ENCODE measurements at regions of chr1 and their contacts with region 1.

Region 1: DNA sequence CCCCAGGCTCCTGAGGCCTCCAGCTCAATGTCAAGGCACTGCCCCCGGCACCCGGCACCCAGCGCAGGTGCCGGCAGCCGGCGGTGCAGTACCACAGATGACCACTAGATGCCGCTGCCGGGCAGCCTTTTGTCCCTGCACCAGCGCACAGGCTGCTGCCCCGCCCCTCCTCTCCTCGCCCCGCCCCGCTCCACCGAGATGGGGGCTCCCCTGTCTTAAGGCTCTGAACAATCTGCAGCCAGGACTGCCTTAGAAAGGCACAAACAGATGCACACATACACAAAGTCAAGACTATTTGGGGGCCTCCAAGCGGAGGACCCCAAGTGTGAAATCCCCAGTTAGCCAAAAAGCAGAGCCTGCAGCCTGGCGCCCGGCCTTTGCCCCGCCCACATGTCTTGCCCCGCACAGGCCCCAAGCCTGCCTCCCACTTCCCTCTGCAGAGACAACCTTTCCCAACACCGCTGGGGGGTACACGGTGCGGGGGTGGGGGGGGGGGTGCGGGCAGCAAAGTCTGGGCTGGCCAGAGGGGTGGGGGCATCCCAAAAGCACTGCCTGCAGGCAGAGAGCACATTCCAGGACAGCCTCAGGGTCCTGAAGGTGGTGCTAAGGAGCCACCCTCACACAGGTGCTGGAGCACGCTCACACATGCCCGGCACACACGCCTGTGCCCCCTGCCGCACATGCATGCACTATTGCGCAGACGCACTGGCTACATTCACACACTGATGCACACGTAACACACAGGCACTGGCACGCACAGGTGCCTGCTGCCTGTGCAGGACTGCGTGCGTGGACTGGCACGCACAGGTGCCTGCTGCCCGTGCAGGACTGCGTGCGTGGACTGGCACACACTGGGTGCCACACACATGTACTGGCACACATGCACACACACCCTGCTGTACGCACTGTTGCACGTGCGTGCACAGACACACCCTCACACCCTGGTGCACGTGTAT is 37.1 kb downstream of the ARHGEF16 start:
- DNase-seq: peak; percentile 24
- ATAC-seq: peak; percentile 98
- H3K4me3 ChIP-seq: no peak overlapping the region
- H3K27ac ChIP-seq: no peak overlapping the region
- H3K4me1 ChIP-seq: no peaks in the 10 kb centered on the region
- H3K27me3 ChIP-seq: no peaks in the 10 kb centered on the region
- CTCF ChIP-seq: peak; percentile 89
- POLR2A ChIP-seq: no peak
- RAD21 ChIP-seq: peak; percentile 90

Region 2: GRCh38 chr1:3618881-3619671 is 127.5 kb after region 1 on chr1:
- CTCF ChIA-PET with region 1: interaction called, 9 read pairs
- POLR2A ChIA-PET with region 1: no interaction called
- dilution Hi-C with region 1: no loop called
- in situ Hi-C with region 1: loop called (anchors 5 kb)
- intact Hi-C with region 1: loop called (anchors 1 kb)
- DNase-seq: peak; percentile 80
- ATAC-seq: peak; percentile 89
- H3K4me3 ChIP-seq: no peak overlapping the region
- H3K27ac ChIP-seq: no peak overlapping the region
- H3K4me1 ChIP-seq: peaks cover 11% of the 10 kb centered on the region
- H3K27me3 ChIP-seq: no peaks in the 10 kb centered on the region
- CTCF ChIP-seq: peak; percentile 92
- POLR2A ChIP-seq: no peak
- RAD21 ChIP-seq: peak; percentile 72

Region 3: DNA sequence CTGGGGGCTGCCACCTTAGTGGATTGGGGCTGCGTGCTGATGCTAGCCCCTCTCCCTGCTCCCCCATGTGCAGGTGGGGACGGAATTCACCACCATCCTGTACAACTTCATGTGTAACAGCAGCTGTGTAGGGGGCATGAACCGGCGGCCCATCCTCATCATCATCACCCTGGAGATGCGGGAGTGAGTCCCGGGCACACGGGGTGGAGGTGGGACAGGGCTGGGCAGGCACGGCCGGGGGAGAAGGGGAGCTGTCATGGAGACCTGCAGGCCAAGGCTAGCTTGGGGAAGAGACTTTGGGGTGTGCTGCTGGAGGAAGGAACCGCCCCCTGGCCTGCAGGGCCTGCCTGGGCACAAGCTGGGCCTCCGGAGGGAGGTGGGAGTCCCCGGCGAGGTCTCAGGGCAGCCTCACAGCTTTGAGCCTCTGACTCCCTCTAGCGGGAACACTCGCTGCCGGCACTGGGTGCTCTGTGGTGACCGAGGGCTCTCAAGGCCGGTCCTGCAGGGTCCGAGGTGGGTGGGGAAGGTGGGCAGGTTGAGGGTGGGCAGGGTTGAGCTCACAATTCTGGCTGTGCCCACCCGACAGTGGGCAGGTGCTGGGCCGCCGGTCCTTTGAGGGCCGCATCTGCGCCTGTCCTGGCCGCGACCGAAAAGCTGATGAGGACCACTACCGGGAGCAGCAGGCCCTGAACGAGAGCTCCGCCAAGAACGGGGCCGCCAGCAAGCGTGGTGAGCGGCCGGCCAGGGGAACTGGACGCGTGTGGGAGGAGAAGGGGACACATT is 235.7 kb after region 1 on chr1:
- CTCF ChIA-PET with region 1: no interaction called
- POLR2A ChIA-PET with region 1: no interaction called
- dilution Hi-C with region 1: no loop called
- in situ Hi-C with region 1: no loop called
- intact Hi-C with region 1: loop called (anchors 10 kb)
- DNase-seq: no peak
- ATAC-seq: peak; percentile 54; the same call in 1 of the 2 replicates
- H3K4me3 ChIP-seq: no peak overlapping the region
- H3K27ac ChIP-seq: no peak overlapping the region
- H3K4me1 ChIP-seq: no peaks in the 10 kb centered on the region
- H3K27me3 ChIP-seq: no peaks in the 10 kb centered on the region; the same call in 1 of the 2 replicates
- CTCF ChIP-seq: peak; percentile 38
- POLR2A ChIP-seq: no peak
- RAD21 ChIP-seq: peak; percentile 21; the same call in 1 of the 2 replicates

Region 4: GRCh38 chr1:3942818-3943431 is 451.4 kb after region 1 on chr1:
- CTCF ChIA-PET with region 1: no interaction called
- POLR2A ChIA-PET with region 1: no interaction called
- dilution Hi-C with region 1: no loop called
- in situ Hi-C with region 1: no loop called
- intact Hi-C with region 1: no loop called
- DNase-seq: no peak
- ATAC-seq: no peak
- H3K4me3 ChIP-seq: no peak overlapping the region
- H3K27ac ChIP-seq: no peak overlapping the region
- H3K4me1 ChIP-seq: no peaks in the 10 kb centered on the region
- H3K27me3 ChIP-seq: no peaks in the 10 kb centered on the region
- CTCF ChIP-seq: no peak
- POLR2A ChIP-seq: no peak
- RAD21 ChIP-seq: no peak

Measured in IMR-90 (cell line).